Right ventricle myocardium superior (tissue), 1 donor: ENCODE measurements at regions of chr2 and their contacts with region 1.

Region 1: DNA sequence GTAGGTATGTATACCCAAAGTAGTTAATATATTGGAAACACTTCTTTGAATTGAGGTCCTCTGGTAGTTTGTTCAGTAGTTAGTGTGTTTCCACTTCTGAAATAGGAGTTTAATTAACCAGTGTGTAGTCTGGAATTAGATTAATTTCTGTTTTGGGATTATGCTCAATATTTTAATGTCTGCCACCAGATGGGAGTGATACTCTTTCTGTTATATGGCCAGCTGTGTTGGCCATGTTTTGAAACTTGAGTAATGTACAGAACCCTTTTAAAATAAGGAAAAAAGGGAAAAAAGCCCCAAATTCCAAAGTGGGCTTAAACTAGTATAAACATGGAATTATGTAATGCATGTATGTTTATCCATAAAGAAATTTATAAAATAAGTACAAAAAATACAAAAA is 147.7 kb downstream of the CTNNA2 start:
- DNase-seq: no peak
- ATAC-seq: no peak

Region 2: GRCh38 chr2:78940998-78941397 is 719.6 kb before region 1 on chr2:
- intact Hi-C with region 1: loop called (anchors 10 kb)
- DNase-seq: no peak
- ATAC-seq: no peak

Region 3: GRCh38 chr2:79860228-79861058 is 199.9 kb after region 1 on chr2:
- intact Hi-C with region 1: no loop called
- DNase-seq: no peak
- ATAC-seq: no peak